A549 (cell line): ENCODE measurements at regions of chrX and their contacts with region 1.

Region 1: DNA sequence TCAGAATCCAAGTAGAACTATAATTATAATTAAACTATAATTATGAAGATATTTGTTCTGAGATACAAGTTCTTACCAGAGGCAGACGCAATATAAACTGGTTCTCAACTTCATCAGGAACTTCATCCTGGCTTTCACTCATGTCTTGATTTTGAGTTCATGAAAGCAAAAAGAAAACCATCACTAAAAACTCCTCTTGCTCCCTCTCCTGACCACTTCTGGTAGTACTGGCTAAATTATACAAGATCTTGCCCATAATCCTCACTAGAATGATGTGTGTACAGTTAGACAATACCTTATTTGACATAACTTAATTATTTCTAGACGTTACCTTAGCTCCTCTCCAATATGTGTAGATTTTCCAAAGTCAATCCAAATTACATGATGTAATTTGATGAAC is 3.7 kb downstream of the TAF7L start:
- DNase-seq: peak; percentile 10 to 50
- ATAC-seq: peak; percentile 59 to 78; a peak in 4 of 6 replicates
- H3K4me3 ChIP-seq: no peak overlapping the region
- H3K27ac ChIP-seq: no peak overlapping the region
- H3K4me1 ChIP-seq: no peaks in the 10 kb centered on the region
- CTCF ChIP-seq: peak; percentile 55
- EP300 ChIP-seq: no peak
- POLR2A ChIP-seq: no peak
- RAD21 ChIP-seq: peak; percentile 49 to 62; a peak in 4 of 5 replicates

Region 2: DNA sequence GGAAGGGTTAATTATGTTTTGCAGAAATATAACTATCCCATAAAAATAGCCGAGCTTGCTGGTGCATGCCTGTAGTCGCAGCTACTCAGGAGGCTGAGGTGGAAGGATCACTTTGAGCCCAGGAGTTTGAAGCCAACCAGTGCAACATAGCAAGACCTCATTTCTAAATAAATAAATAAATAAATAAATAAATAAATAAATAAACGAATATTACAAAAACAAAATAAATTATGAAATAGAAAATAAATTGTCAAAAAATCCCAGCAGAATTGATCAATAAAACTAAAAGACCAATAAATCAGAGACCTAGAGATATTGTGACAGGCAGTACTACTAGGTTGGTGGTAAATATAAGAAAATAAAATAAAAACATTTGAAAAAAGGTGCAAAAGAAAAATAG is 324.6 kb before region 1 on chrX:
- CTCF ChIA-PET with region 1: no interaction called
- POLR2A ChIA-PET with region 1: no interaction called
- DNase-seq: no peak
- ATAC-seq: no peak
- H3K4me3 ChIP-seq: no peak overlapping the region
- H3K27ac ChIP-seq: no peak overlapping the region
- H3K4me1 ChIP-seq: no peaks in the 10 kb centered on the region
- CTCF ChIP-seq: no peak
- EP300 ChIP-seq: no peak
- POLR2A ChIP-seq: no peak
- RAD21 ChIP-seq: no peak

Region 3: DNA sequence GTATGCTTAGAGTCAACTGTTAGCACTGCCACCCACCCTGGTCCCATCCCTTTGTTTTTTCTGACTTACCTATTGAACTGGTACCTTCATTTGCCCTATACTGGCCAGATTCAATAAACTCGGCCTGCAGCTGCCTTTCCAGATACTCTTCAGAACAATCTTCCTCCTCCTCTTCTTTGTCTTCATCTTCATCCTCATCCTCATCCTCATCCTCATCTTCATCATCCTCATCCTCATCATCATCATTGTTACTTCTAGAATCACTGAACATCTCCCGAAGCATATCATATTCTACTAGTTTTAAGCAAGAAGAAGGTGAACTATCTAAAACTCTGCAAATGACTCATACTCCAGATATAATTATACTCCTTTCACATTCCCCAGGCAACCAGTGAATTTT is 11.2 kb before region 1 on chrX:
- CTCF ChIA-PET with region 1: interaction called, 12 read pairs
- POLR2A ChIA-PET with region 1: no interaction called
- DNase-seq: no peak
- ATAC-seq: no peak
- H3K4me3 ChIP-seq: no peak overlapping the region
- H3K27ac ChIP-seq: no peak overlapping the region
- H3K4me1 ChIP-seq: no peaks in the 10 kb centered on the region
- CTCF ChIP-seq: no peak
- EP300 ChIP-seq: no peak
- POLR2A ChIP-seq: no peak
- RAD21 ChIP-seq: no peak